ENCODE measurements at regions of chr7 and their contacts with region 1.

Region 1: GRCh38 chr7:80428161-80429054 is 83.5 kb downstream of the GNAT3 start:
- DNase-seq: peak; percentile 73
- ATAC-seq: peak; percentile 96
- H3K4me3 ChIP-seq: 0 out of 2 replicates have a peak overlapping the region, but pooled peaks have one; percentile 25
- H3K27ac ChIP-seq: no peak overlapping the region
- H3K4me1 ChIP-seq: peaks cover 10% of the 10 kb centered on the region; the same call in 1 of the 2 replicates
- H3K27me3 ChIP-seq: no peaks in the 10 kb centered on the region
- CTCF ChIP-seq: peak; percentile 92

Region 2: GRCh38 chr7:80453699-80454340 is 25.4 kb after region 1 on chr7:
- CTCF ChIA-PET with region 1: interaction called, 3 read pairs
- POLR2A ChIA-PET with region 1: no interaction called
- intact Hi-C with region 1: loop called (anchors 1 kb)
- DNase-seq: peak; percentile 57
- ATAC-seq: 0 out of 2 replicates have a peak, but pooled peaks have one; percentile 29
- H3K4me3 ChIP-seq: no peak overlapping the region
- H3K27ac ChIP-seq: no peak overlapping the region
- H3K4me1 ChIP-seq: peaks cover 10% of the 10 kb centered on the region
- H3K27me3 ChIP-seq: no peaks in the 10 kb centered on the region
- CTCF ChIP-seq: peak; percentile 76

Region 3: DNA sequence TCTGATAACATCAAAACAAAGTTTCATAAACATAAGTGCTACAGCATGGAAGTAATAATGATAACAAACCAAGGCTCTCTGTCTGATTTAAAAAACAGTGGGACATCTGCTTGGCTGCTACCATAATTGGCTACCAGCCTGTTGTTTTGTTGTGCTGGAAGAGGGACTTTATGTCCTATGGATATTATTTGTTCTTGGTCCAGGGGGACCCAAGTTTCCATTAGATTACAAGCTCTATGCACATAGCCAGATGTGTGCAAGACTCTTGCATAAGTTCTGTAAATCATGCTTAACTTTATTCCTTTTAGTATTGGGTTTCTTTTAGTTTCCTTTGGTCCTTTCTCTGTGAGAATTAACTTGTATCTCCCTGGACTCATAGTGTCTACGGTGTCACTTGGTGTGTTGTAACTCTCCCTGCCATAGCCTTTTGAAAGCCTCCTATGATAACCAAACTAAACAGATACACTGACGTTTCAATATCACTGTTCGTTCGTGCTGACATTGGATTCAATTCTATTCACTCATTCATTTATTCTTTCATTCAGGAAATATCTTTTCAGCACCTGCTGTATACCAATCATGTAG is 168.6 kb after region 1 on chr7:
- CTCF ChIA-PET with region 1: no interaction called
- POLR2A ChIA-PET with region 1: no interaction called
- intact Hi-C with region 1: no loop called
- DNase-seq: no peak
- ATAC-seq: no peak
- H3K4me3 ChIP-seq: no peak overlapping the region
- H3K27ac ChIP-seq: no peak overlapping the region
- H3K4me1 ChIP-seq: 0 out of 2 replicates have a peak, but pooled peaks cover 15% of the 10 kb centered on the region
- H3K27me3 ChIP-seq: no peaks in the 10 kb centered on the region
- CTCF ChIP-seq: no peak

Region 4: GRCh38 chr7:80681272-80681885 is 253.0 kb after region 1 on chr7:
- CTCF ChIA-PET with region 1: interaction called, 3 read pairs
- POLR2A ChIA-PET with region 1: no interaction called
- intact Hi-C with region 1: loop called (anchors 1 kb)
- DNase-seq: peak; percentile 55
- ATAC-seq: peak; percentile 90
- H3K4me3 ChIP-seq: no peak overlapping the region
- H3K27ac ChIP-seq: no peak overlapping the region
- H3K4me1 ChIP-seq: peaks cover 20% of the 10 kb centered on the region
- H3K27me3 ChIP-seq: no peaks in the 10 kb centered on the region
- CTCF ChIP-seq: peak; percentile 70

Region 5: GRCh38 chr7:81211204-81211933 is 783.0 kb after region 1 on chr7:
- CTCF ChIA-PET with region 1: no interaction called
- POLR2A ChIA-PET with region 1: no interaction called
- intact Hi-C with region 1: no loop called
- DNase-seq: no peak
- ATAC-seq: no peak
- H3K4me3 ChIP-seq: no peak overlapping the region
- H3K27ac ChIP-seq: no peak overlapping the region
- H3K4me1 ChIP-seq: peaks cover 11% of the 10 kb centered on the region
- H3K27me3 ChIP-seq: no peaks in the 10 kb centered on the region
- CTCF ChIP-seq: no peak

Region 6: GRCh38 chr7:81469869-81470723 is 1041.7 kb after region 1 on chr7:
- CTCF ChIA-PET with region 1: interaction called, 3 read pairs
- POLR2A ChIA-PET with region 1: no interaction called
- intact Hi-C with region 1: loop called (anchors 10 kb)
- DNase-seq: peak; percentile 70
- ATAC-seq: peak; percentile 98
- H3K4me3 ChIP-seq: no peak overlapping the region
- H3K27ac ChIP-seq: no peak overlapping the region
- H3K4me1 ChIP-seq: no peaks in the 10 kb centered on the region
- H3K27me3 ChIP-seq: no peaks in the 10 kb centered on the region
- CTCF ChIP-seq: peak; percentile 80